ENCODE measurements at regions of chr12 and their contacts with region 1.

Region 1: DNA sequence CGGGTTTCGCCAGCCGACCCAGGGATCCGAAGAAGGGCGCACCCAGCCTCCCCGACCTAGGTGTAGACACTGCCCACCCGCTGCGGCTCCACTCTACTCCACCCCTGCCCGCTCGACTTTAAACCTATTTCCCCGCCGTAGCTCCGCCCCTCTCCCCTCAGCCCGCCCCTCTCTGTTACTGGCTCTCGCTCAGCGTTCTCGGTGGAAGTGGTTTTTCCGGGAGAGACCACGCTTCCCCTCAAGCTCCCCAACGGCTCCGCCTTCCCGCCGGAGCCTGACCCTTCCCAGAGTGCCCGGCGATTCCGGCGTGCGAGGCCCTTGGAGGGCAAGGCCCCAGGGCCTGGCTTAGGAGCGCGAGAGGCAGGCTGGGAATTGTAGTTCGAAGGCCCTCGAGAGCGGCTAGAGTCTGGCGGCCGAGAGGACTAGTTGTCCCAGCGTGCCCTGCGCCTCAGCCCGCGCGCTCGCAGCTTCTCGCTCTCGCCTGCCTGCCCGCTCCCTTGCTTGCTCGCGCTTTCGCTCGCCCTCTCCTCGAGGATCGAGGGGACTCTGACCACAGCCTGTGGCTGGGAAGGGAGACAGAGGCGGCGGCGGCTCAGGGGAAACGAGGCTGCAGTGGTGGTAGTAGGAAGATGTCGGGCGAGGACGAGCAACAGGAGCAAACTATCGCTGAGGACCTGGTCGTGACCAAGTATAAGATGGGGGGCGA is at the start of gene PA2G4:
- DNase-seq: peak; percentile 99 to 100 (median 99)
- H3K4me3 ChIP-seq: peak within 1 kb of the TSS; percentile 75 to 97 (median 86)
- H3K27ac ChIP-seq: peak within 1 kb of the TSS; percentile 74 to 93
- H3K4me1 ChIP-seq: peaks cover 16 to 34% (median 27%) of the 10 kb centered on the region in 4 experiments
- H3K27me3 ChIP-seq: no peaks in the 10 kb centered on the region

Region 2: GRCh38 chr12:56078990-56079664 is 25.1 kb before region 1 on chr12:
- CTCF ChIA-PET with region 1: interaction called, 10 read pairs
- POLR2A ChIA-PET with region 1: interaction called, 3 read pairs
- DNase-seq: peak; percentile 44 to 57 (median 49)
- H3K4me3 ChIP-seq: peak overlapping the region; percentile 34 to 77 (median 64)
- H3K27ac ChIP-seq: no peak overlapping the region
- H3K4me1 ChIP-seq: peaks cover 0 to 18% (median 17%) of the 10 kb centered on the region in 4 experiments
- H3K27me3 ChIP-seq: peaks cover 0 to 42% (median 20%) of the 10 kb centered on the region in 5 experiments

Region 3: DNA sequence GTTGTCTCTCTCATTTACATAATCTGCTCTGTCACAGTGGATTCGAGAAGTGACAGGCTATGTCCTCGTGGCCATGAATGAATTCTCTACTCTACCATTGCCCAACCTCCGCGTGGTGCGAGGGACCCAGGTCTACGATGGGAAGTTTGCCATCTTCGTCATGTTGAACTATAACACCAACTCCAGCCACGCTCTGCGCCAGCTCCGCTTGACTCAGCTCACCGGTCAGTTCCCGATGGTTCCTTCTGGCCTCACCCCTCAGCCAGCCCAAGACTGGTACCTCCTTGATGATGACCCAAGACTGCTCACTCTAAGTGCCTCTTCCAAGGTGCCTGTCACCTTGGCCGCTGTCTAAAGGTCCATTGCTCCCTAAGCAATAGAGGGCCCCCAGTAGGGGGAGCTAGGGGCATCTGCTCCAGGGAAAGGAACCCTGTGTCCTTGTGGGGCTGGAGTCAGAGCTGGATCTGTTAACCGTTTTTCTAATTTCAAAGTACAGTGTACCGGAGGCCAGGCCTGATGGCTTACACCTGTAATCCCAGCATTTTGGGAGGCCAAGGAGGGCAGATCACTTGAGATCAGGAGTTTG is 19.2 kb before region 1 on chr12:
- CTCF ChIA-PET with region 1: interaction called, 10 read pairs
- POLR2A ChIA-PET with region 1: interaction called, 3 read pairs
- DNase-seq: peak in 2 of 3 donors; percentile 23 to 40
- H3K4me3 ChIP-seq: no peak overlapping the region
- H3K27ac ChIP-seq: no peak overlapping the region
- H3K4me1 ChIP-seq: peaks cover 0 to 7% (median 5%) of the 10 kb centered on the region in 4 experiments
- H3K27me3 ChIP-seq: peaks cover 0 to 35% (median 20%) of the 10 kb centered on the region in 5 experiments

Region 4: GRCh38 chr12:56537546-56537945 is 433.3 kb after region 1 on chr12:
- CTCF ChIA-PET with region 1: no interaction called
- POLR2A ChIA-PET with region 1: no interaction called
- DNase-seq: no peak
- H3K4me3 ChIP-seq: no peak overlapping the region
- H3K27ac ChIP-seq: no peak overlapping the region
- H3K4me1 ChIP-seq: no peaks in the 10 kb centered on the region
- H3K27me3 ChIP-seq: no peaks in the 10 kb centered on the region